ENCODE measurements at regions of chr3 and their contacts with region 1.

Region 1: GRCh38 chr3:194682694-194683310 is 2.9 kb upstream of the FAM43A start:
- H3K4me3 ChIP-seq: no peak overlapping the region
- H3K27ac ChIP-seq: no peak overlapping the region
- H3K4me1 ChIP-seq: no peaks in the 10 kb centered on the region
- CTCF ChIP-seq: peak; percentile 82

Region 2: DNA sequence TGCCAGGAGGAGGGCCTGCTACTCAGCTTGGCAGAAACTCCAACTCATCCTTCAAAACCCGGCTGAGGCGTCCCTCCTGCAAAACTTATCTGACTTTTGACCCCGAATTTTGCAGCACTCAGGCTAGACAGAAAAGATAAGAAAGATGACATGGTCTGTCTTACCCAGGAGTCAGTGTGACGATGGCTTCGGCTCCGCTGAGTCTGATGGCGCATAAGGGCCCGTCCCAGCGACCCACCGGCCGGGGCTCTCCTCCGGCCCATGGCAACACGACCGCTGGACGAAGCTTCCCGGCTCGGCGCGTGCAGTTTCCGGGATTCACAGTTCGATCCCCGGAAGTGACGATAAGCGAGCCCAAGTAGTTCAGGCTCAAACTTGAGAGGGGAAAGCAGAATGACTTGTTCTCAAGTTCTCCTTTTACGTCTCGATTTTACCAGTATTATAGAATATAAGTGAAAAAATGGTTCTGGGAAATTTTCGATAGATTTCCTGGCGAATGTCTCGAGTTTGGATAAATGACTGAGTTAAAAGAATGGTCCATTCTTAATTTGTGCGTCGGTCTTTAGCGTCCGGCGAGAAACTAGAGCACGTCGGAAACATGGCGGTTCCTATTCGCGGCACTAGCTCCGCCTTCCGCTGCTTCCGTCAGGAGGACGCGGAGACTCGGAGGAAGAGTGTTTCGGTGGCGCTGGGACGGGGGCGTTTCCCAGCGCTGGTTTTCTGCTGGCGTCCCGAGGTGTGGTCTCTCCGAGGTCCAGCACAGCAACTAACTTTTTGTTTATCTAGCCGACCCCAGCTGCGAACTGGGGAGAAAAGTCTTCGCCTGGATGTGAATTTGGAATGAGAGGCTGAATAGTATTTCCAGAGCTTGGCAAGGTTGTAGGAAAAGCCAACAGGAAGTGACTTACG is 10.6 kb before region 1 on chr3 and contains the start of gene LSG1:
- CTCF ChIA-PET with region 1: interaction called, 32 read pairs
- POLR2A ChIA-PET with region 1: interaction called, 8 read pairs
- H3K4me3 ChIP-seq: peak within 1 kb of the TSS; percentile 86
- H3K27ac ChIP-seq: peak within 1 kb of the TSS; percentile 53
- H3K4me1 ChIP-seq: no peaks in the 10 kb centered on the region
- CTCF ChIP-seq: no peak

Region 3: DNA sequence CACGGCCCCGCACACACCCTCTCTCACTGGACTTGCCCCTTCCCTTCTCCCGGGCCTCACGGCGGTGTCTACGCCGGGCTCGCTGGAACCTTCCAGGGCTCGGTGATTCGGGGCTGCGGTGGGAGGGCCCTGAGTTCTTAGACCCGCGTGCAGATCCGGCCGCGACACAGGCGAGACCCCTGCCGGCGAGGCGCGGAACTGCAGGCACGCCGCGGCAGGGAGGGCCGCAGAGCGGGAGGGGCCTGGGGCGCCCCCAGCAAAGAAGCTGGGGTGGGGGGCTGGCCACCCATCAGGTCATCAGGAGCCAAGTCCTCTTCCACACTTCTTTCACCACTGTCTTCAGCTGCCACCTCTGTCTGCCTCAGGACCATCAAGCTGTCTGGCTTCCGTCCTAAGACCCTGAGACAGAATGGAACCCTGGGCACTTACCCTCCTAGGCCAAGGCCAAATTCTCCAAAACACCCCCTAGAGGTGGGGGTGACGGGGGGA is 423.7 kb after region 1 on chr3:
- CTCF ChIA-PET with region 1: interaction called, 23 read pairs
- POLR2A ChIA-PET with region 1: no interaction called
- H3K4me3 ChIP-seq: no peak overlapping the region
- H3K27ac ChIP-seq: no peak overlapping the region
- H3K4me1 ChIP-seq: peaks cover 10% of the 10 kb centered on the region; the same call in 1 of the 2 replicates
- CTCF ChIP-seq: peak; percentile 80

Region 4: GRCh38 chr3:195260280-195260905 is 577.6 kb after region 1 on chr3:
- CTCF ChIA-PET with region 1: interaction called, 20 read pairs
- POLR2A ChIA-PET with region 1: interaction called, 3 read pairs
- H3K4me3 ChIP-seq: peak overlapping the region; percentile 58
- H3K27ac ChIP-seq: no peak overlapping the region
- H3K4me1 ChIP-seq: peaks cover 7% of the 10 kb centered on the region
- CTCF ChIP-seq: no peak

Measured in HEK293 (cell line).